A549 (cell line): ENCODE measurements at regions of chr5 and their contacts with region 1.

Region 1: DNA sequence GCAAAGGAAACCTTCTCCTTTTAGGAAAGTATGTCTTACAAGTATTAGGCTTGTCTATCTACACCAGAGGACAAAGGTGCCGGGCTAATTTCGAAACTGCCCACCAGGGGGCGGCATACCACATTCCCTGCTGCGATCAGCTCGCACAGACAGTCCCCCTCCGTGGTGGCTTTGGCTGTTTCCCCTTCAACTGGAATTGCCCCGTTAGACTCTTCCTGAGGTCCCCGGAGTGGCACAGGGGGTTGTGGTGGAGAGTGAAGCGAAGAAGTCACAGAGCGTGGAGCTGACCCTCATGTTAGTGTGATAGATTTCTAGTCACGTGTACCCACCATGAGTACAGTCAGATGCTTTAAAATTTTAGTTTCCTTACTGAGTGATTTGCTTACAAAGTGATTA is 17.5 kb downstream of the PTTG1 start:
- DNase-seq: peak; percentile 74 to 91
- ATAC-seq: peak; percentile 86 to 97
- H3K4me3 ChIP-seq: peak overlapping the region; percentile 39
- H3K27ac ChIP-seq: peak overlapping the region in 1 of 2 experiments; percentile 68; a peak in 3 of 6 replicates
- H3K4me1 ChIP-seq: no peaks in the 10 kb centered on the region
- CTCF ChIP-seq: peak; percentile 84
- EP300 ChIP-seq: no peak
- POLR2A ChIP-seq: no peak
- RAD21 ChIP-seq: peak; percentile 48 to 55

Region 2: GRCh38 chr5:160369990-160370712 is 69.1 kb before region 1 on chr5 and contains the start of gene C1QTNF2:
- CTCF ChIA-PET with region 1: no interaction called
- POLR2A ChIA-PET with region 1: no interaction called
- DNase-seq: peak; percentile 6 to 56
- ATAC-seq: peak; percentile 46 to 83; a peak in 4 of 6 replicates
- H3K4me3 ChIP-seq: peak within 1 kb of the TSS; percentile 47
- H3K27ac ChIP-seq: peak within 1 kb of the TSS; percentile 2 to 83; a peak in 4 of 6 replicates
- H3K4me1 ChIP-seq: no peaks in the 10 kb centered on the region
- CTCF ChIP-seq: no peak
- EP300 ChIP-seq: no peak
- POLR2A ChIP-seq: no peak
- RAD21 ChIP-seq: no peak
- polyA plus RNA-seq, gene C1QTNF2: 0.04 TPM in 1 of 2 replicates, not detected in the other

Region 3: GRCh38 chr5:160385496-160385895 is 53.7 kb before region 1 on chr5:
- CTCF ChIA-PET with region 1: no interaction called
- POLR2A ChIA-PET with region 1: no interaction called
- DNase-seq: no peak
- ATAC-seq: no peak
- H3K4me3 ChIP-seq: no peak overlapping the region
- H3K27ac ChIP-seq: no peak overlapping the region
- H3K4me1 ChIP-seq: no peaks in the 10 kb centered on the region
- CTCF ChIP-seq: no peak
- EP300 ChIP-seq: no peak
- POLR2A ChIP-seq: no peak
- RAD21 ChIP-seq: no peak

Region 4: GRCh38 chr5:160418561-160419457 is 20.4 kb before region 1 on chr5 and contains the start of gene SLU7:
- CTCF ChIA-PET with region 1: interaction called, 139 read pairs
- POLR2A ChIA-PET with region 1: interaction called, 7 read pairs
- DNase-seq: peak; percentile 93 to 95
- ATAC-seq: peak; percentile 77 to 88
- H3K4me3 ChIP-seq: peak within 1 kb of the TSS; percentile 75
- H3K27ac ChIP-seq: peak within 1 kb of the TSS; percentile 81 to 89
- H3K4me1 ChIP-seq: peaks cover 40% of the 10 kb centered on the region
- CTCF ChIP-seq: no peak
- EP300 ChIP-seq: no peak
- POLR2A ChIP-seq: peak; percentile 52
- RAD21 ChIP-seq: no peak
- polyA plus RNA-seq, gene SLU7: 49.0 and 67.0 TPM in 2 replicates

Region 5: GRCh38 chr5:160452795-160453194 is 13.6 kb after region 1 on chr5:
- CTCF ChIA-PET with region 1: interaction called, 20 read pairs
- POLR2A ChIA-PET with region 1: no interaction called
- DNase-seq: no peak
- ATAC-seq: no peak
- H3K4me3 ChIP-seq: no peak overlapping the region
- H3K27ac ChIP-seq: no peak overlapping the region
- H3K4me1 ChIP-seq: no peaks in the 10 kb centered on the region
- CTCF ChIP-seq: no peak
- EP300 ChIP-seq: no peak
- POLR2A ChIP-seq: no peak
- RAD21 ChIP-seq: no peak

Region 6: DNA sequence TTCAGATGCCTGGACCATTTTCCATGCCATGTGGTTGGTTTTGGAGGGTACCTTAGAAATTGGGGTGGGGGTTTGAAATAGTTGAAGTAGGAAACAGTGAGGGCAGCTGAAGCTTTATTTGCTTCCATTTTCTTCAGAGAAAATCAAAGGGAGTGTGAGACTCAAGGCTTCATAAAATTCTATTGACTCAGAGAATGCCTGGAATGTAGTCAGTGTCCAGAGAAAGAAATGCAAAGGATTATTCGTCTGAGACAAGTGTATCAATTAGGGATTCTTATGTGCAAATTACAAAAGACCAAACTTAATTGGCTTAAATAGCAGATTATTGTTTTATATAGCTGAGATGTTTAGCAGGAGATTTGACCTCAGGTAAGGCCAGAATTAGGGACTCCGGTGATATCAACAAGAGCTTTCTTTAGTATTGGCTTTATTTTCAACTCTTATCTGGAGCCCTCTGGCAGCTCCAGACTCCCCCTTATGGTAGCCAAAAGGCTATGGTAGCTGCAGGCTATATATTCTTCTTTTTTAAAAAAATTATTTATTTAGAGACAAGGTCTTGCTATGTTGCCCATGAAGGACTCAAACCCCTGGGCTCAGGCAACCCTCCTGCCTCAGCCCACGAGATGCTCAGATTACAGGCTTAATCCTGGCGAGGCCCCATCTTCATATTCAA is 21.3 kb after region 1 on chr5:
- CTCF ChIA-PET with region 1: interaction called, 49 read pairs
- POLR2A ChIA-PET with region 1: no interaction called
- DNase-seq: no peak
- ATAC-seq: peak in 1 of 2 experiments; percentile 52; a peak in 2 of 6 replicates
- H3K4me3 ChIP-seq: no peak overlapping the region
- H3K27ac ChIP-seq: no peak overlapping the region
- H3K4me1 ChIP-seq: 0 out of 3 replicates have a peak, but pooled peaks cover 5% of the 10 kb centered on the region
- CTCF ChIP-seq: no peak
- EP300 ChIP-seq: no peak
- POLR2A ChIP-seq: no peak
- RAD21 ChIP-seq: no peak

Region 7: DNA sequence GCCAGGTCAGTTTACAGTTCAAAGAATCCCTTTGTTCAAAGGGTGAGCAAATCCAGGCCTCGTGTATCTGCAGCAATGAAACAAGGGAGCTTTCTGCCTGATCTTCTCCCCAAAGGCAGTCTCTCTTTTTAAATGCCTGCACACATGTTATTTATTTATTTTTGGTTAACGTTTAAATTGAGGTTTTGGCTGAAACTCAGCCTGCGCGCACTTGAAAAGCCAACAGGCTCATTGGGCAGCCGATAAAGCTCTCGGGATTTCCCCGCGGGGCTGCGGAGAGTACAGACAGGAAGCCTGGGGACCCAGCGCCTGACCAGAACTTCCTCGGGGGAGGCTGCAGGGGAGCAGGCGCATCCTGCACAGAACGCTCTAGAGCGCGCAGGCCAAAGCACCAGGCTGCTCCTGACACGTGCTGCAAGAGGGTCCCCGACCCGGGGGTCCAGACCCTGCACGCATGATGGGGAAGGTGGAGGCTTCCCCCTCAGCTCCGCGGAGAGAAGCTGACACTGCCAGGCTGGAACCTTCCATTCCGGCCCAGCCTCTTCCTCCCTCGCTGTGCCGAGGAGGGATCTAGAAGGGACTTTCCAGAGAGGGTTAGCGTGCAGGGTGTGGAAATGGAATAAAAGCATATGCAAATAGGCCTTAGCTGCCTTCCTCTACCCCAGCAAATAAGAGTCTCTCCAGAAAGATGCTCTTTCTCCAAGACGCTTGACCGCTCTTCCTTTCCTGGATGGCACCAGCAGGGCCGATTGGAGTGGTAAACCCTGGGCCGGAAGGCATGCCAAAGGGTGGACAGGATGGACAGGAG is 28.6 kb after region 1 on chr5:
- CTCF ChIA-PET with region 1: interaction called, 49 read pairs
- POLR2A ChIA-PET with region 1: no interaction called
- DNase-seq: peak; percentile 18 to 30
- ATAC-seq: peak; percentile 76 to 88
- H3K4me3 ChIP-seq: peak overlapping the region; percentile 28; the same call in 2 of the 3 replicates
- H3K27ac ChIP-seq: peak overlapping the region in 1 of 2 experiments; percentile 52; a peak in 2 of 6 replicates
- H3K4me1 ChIP-seq: peaks cover 17% of the 10 kb centered on the region
- CTCF ChIP-seq: no peak
- EP300 ChIP-seq: no peak
- POLR2A ChIP-seq: no peak
- RAD21 ChIP-seq: no peak

Region 8: GRCh38 chr5:160500786-160501779 is 61.9 kb after region 1 on chr5:
- CTCF ChIA-PET with region 1: interaction called, 14 read pairs
- POLR2A ChIA-PET with region 1: no interaction called
- DNase-seq: no peak
- ATAC-seq: no peak
- H3K4me3 ChIP-seq: no peak overlapping the region
- H3K27ac ChIP-seq: no peak overlapping the region
- H3K4me1 ChIP-seq: no peaks in the 10 kb centered on the region
- CTCF ChIP-seq: no peak
- EP300 ChIP-seq: no peak
- POLR2A ChIP-seq: no peak
- RAD21 ChIP-seq: no peak

Region 9: DNA sequence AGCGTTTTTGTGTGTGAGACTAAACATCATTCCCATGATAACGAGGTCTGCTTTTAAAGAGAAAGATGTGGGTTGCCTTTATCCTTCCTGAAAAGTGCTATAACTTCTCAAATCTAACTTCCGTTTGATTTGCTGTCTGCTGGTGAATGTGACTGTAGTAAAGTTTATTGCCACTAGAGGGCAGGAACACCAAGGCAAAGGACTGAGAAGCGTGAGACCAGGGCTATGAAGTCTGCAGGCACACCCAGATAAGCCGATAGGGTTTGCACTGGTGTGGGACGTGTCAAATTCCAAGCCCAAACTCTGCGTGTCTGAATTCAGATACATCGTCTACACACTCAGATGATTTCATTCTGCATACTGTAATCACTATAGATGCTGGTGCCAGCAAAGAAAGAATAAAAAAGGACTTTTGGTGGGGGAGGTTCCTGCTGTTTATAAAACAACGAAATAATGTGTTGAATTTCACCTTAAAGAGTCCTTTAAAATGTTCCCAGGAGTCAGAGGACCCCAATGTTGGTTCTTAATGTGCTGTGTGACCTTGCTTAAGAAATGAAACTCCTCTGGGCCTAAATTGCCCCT is 69.7 kb after region 1 on chr5:
- CTCF ChIA-PET with region 1: interaction called, 12 read pairs
- POLR2A ChIA-PET with region 1: interaction called, 4 read pairs
- DNase-seq: peak; percentile 78 to 79
- ATAC-seq: peak; percentile 84 to 94
- H3K4me3 ChIP-seq: no peak overlapping the region
- H3K27ac ChIP-seq: no peak overlapping the region
- H3K4me1 ChIP-seq: no peaks in the 10 kb centered on the region
- CTCF ChIP-seq: peak; percentile 85
- EP300 ChIP-seq: no peak
- POLR2A ChIP-seq: no peak
- RAD21 ChIP-seq: peak; percentile 88 to 95

Region 10: GRCh38 chr5:160548949-160549665 is 109.9 kb after region 1 on chr5:
- CTCF ChIA-PET with region 1: no interaction called
- POLR2A ChIA-PET with region 1: no interaction called
- DNase-seq: no peak
- ATAC-seq: no peak
- H3K4me3 ChIP-seq: no peak overlapping the region
- H3K27ac ChIP-seq: no peak overlapping the region
- H3K4me1 ChIP-seq: no peaks in the 10 kb centered on the region
- CTCF ChIP-seq: no peak
- EP300 ChIP-seq: no peak
- POLR2A ChIP-seq: no peak
- RAD21 ChIP-seq: no peak

Region 11: DNA sequence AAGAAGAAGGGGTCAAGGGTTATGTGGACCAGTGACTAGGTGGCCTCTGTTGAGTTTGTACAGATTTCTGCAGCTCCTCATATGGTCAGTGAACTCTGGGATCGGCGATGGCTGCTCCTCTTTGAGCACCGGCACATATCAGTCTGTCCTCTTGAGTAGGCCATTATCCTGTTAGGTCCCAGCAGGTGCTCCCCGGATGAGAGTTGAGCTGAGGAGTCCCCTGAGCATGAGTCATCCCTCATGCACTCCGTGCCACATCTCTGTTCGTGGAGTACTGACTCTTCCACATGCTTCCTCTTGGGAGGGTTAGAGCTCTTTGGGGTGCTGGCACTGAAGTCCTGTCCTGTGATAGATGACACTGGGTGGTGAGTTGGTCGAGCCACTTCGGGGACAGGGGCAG is 126.2 kb after region 1 on chr5:
- CTCF ChIA-PET with region 1: no interaction called
- POLR2A ChIA-PET with region 1: no interaction called
- DNase-seq: no peak
- ATAC-seq: no peak
- H3K4me3 ChIP-seq: no peak overlapping the region
- H3K27ac ChIP-seq: no peak overlapping the region
- H3K4me1 ChIP-seq: no peaks in the 10 kb centered on the region
- CTCF ChIP-seq: no peak
- EP300 ChIP-seq: no peak
- POLR2A ChIP-seq: no peak
- RAD21 ChIP-seq: no peak